Left lung (tissue), 14 donors: ENCODE measurements at regions of chr12 and their contacts with region 1.

Region 1: DNA sequence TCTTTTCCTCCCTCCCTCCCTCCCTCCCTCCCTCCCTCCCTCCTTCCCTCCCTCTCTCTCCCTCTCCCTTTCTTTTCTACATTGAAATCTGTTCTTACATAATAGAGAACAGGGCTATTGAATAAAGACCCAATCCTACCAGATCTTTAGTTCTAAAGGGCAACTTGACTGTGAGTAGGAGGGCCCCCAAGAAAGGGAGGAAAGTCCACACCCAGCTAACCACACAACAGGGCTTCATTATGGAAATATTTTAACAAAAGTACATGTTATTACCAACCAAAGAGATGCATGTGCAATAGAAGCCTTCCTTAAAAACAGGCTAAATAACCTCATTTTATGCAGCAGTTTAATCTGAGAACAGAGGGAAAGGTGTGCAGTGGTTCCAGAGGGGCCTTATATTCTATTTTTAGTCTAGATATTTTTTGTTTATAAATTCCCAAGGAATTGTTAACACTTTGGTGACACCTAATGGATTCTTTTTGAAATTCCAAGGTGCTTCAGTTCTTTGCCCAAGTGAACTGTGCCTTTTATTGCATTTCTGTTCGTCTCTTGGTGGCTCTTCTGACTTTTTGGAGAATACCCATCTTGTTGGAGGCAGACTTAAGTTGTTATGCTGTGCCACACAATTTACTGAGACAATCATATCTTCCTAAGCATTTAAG is 63.0 kb downstream of the GNS start:
- DNase-seq: no peak
- ATAC-seq: peak; percentile 13
- H3K4me3 ChIP-seq: no peak overlapping the region
- H3K27ac ChIP-seq: peak overlapping the region in 1 of 2 donors; percentile 31
- H3K4me1 ChIP-seq: peaks cover 5 to 66% of the 10 kb centered on the region in 2 donors
- H3K27me3 ChIP-seq: no peaks in the 10 kb centered on the region
- CTCF ChIP-seq: peak; percentile 15 to 24

Region 2: DNA sequence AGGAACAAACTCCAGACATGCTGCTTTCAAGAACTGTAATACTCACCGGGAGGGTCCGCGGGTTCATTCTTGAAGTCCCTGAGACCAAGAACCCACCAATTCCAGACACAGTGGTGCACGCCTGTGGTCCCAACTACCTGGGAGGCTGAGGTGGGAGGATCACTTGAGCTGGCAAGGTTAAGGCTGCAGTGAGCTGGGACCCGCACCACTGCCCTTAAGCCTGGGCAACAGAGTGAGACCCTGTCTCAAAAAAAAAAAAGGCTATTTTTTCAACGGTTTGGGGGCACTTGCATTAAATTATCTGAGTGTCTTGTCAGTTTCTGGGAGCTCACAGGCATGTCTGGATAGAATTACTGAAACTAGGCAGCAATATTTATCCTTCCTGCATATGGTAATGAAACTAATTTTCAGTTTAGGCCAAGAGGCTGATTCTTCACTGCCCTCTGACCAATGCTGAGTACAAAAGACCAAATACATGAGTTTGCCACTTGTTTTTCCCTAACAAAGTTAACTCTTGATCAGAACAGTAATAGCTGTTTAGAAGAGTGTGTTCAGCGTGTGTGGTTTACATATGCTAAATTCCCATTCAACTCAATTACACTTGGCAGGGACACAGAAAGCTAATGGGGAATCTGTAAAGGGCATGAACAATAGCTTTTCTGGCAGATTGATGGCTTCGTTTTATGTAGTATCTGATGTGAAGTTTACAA is 151.7 kb before region 1 on chr12:
- intact Hi-C with region 1: loop called in 1 of 2 experiments (anchors 5 kb)
- DNase-seq: no peak
- ATAC-seq: no peak
- H3K4me3 ChIP-seq: no peak overlapping the region
- H3K27ac ChIP-seq: no peak overlapping the region
- H3K4me1 ChIP-seq: peaks cover 0 to 2% of the 10 kb centered on the region in 2 donors
- H3K27me3 ChIP-seq: peaks cover 0 to 18% of the 10 kb centered on the region in 2 donors
- CTCF ChIP-seq: no peak

Region 3: GRCh38 chr12:64660237-64661018 is 35.8 kb before region 1 on chr12:
- intact Hi-C with region 1: no loop called
- DNase-seq: no peak
- ATAC-seq: no peak
- H3K4me3 ChIP-seq: no peak overlapping the region
- H3K27ac ChIP-seq: no peak overlapping the region
- H3K4me1 ChIP-seq: peaks cover 13 to 73% of the 10 kb centered on the region in 2 donors
- H3K27me3 ChIP-seq: no peaks in the 10 kb centered on the region
- CTCF ChIP-seq: no peak